CD4-positive, alpha-beta T cell (primary cell): ENCODE measurements at regions of chr17 and their contacts with region 1.

Region 1: GRCh38 chr17:1673041-1673785 is 11.5 kb downstream of the PRPF8 start:
- DNase-seq: peak in 6 of 14 experiments; percentile 21 to 63 (median 40)
- ATAC-seq: peak; percentile 46
- H3K4me3 ChIP-seq: no peak overlapping the region
- H3K4me3 Mint-ChIP-seq: no peak overlapping the region
- H3K27ac ChIP-seq: no peak overlapping the region
- H3K27ac Mint-ChIP-seq: peak overlapping the region; percentile 38
- H3K4me1 ChIP-seq: peaks cover 14% of the 10 kb centered on the region
- H3K4me1 Mint-ChIP-seq: peaks cover 38% of the 10 kb centered on the region
- H3K27me3 ChIP-seq: no peaks in the 10 kb centered on the region
- H3K27me3 Mint-ChIP-seq: no peaks in the 10 kb centered on the region
- CTCF ChIP-seq: no peak

Region 2: DNA sequence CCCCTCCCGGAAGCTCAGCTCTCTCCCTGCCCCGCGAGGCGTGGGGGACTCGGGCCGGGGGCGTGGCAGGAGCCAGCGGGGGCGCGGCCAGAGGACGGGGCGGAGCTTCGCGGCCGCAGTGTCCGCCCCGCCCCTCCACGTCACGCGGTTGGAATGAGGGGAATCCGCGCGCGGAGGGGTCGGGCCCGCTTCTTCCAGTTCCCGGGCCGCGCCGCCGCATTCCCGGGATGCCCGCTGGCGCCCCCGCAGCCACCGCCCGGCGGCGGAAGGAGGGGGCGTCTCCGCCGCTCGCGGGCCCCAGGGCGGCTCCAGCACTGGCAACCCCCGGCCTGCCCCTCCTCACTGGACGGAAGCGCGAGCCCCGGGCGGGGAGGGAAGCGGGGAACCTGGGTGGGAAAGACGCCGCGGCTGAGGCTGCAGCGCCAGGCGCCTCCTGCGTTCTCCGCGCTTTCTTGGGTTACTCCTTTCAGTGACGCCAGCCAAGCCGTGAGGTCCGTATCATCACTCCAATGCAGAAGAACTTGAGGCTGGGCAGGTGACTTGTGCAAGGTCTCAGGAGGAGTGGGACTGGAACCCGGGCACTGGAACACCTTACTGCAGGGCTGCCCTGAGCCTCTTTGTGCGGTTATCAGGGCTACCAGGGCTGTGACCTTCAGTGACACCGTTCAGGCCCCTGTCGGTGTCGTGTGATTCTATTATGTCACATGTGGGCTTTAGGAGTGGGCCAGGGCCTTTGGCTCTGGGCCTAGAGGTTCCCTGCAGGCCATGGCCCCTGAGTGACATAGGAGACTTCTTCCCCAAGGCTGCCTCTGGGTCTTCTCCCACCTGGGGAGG is 185.0 kb before region 1 on chr17:
- CTCF ChIA-PET with region 1: no interaction called
- POLR2A ChIA-PET with region 1: no interaction called
- intact Hi-C with region 1: no loop called
- DNase-seq: peak; percentile 40 to 88 (median 68)
- ATAC-seq: peak; percentile 34
- H3K4me3 ChIP-seq: peak overlapping the region; percentile 61
- H3K4me3 Mint-ChIP-seq: peak overlapping the region; percentile 88
- H3K27ac ChIP-seq: peak overlapping the region; percentile 24 to 35
- H3K27ac Mint-ChIP-seq: peak overlapping the region; percentile 91
- H3K4me1 ChIP-seq: peaks cover 78% of the 10 kb centered on the region
- H3K4me1 Mint-ChIP-seq: peaks cover 47% of the 10 kb centered on the region
- H3K27me3 ChIP-seq: no peaks in the 10 kb centered on the region
- H3K27me3 Mint-ChIP-seq: no peaks in the 10 kb centered on the region
- CTCF ChIP-seq: no peak

Region 3: DNA sequence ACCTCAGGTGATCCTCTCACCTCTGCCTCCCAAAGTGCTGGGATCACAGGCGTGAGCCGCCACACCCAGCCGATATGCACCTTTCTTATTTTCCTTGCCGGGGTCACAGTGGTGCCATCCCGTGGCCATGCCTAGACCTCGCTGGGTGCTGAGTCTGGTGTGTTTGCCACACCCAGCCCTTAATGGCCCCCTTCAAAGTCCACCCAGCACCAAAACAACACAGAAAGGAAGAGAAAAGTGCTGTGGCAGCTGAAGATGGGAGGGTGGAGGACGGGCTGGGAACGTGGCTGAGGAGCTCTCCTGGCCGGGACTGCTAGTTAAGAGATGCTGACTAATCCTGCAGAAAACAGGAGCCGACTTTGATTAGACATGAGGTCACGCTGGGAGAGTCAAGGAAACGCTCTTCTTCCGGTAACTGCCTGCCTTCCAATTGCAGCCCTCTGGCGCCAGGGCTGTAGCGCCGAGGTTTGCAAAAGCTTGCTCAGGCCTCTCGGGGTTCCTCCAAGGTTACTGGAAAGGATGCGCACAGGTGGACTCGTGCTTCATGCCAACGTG is 55.5 kb before region 1 on chr17:
- CTCF ChIA-PET with region 1: no interaction called
- POLR2A ChIA-PET with region 1: no interaction called
- intact Hi-C with region 1: no loop called
- DNase-seq: no peak
- ATAC-seq: no peak
- H3K4me3 ChIP-seq: no peak overlapping the region
- H3K4me3 Mint-ChIP-seq: no peak overlapping the region
- H3K27ac ChIP-seq: no peak overlapping the region
- H3K27ac Mint-ChIP-seq: no peak overlapping the region
- H3K4me1 ChIP-seq: peaks cover 7% of the 10 kb centered on the region
- H3K4me1 Mint-ChIP-seq: no peaks in the 10 kb centered on the region
- H3K27me3 ChIP-seq: no peaks in the 10 kb centered on the region
- H3K27me3 Mint-ChIP-seq: no peaks in the 10 kb centered on the region
- CTCF ChIP-seq: no peak

Region 4: GRCh38 chr17:1684378-1685189 is 11.4 kb after region 1 on chr17 and contains the start of gene PRPF8:
- CTCF ChIA-PET with region 1: interaction called, 10 read pairs
- POLR2A ChIA-PET with region 1: interaction called, 11 read pairs
- intact Hi-C with region 1: no loop called
- DNase-seq: peak; percentile 97 to 99 (median 98)
- ATAC-seq: peak; percentile 96
- H3K4me3 ChIP-seq: peak within 1 kb of the TSS; percentile 93
- H3K4me3 Mint-ChIP-seq: peak within 1 kb of the TSS; percentile 99
- H3K27ac ChIP-seq: peak within 1 kb of the TSS; percentile 86 to 95
- H3K27ac Mint-ChIP-seq: peak within 1 kb of the TSS; percentile 96
- H3K4me1 ChIP-seq: peaks cover 33% of the 10 kb centered on the region
- H3K4me1 Mint-ChIP-seq: peaks cover 49% of the 10 kb centered on the region
- H3K27me3 ChIP-seq: no peaks in the 10 kb centered on the region
- H3K27me3 Mint-ChIP-seq: no peaks in the 10 kb centered on the region
- CTCF ChIP-seq: no peak
- total RNA-seq, gene PRPF8: 550 to 572 TPM

Region 5: DNA sequence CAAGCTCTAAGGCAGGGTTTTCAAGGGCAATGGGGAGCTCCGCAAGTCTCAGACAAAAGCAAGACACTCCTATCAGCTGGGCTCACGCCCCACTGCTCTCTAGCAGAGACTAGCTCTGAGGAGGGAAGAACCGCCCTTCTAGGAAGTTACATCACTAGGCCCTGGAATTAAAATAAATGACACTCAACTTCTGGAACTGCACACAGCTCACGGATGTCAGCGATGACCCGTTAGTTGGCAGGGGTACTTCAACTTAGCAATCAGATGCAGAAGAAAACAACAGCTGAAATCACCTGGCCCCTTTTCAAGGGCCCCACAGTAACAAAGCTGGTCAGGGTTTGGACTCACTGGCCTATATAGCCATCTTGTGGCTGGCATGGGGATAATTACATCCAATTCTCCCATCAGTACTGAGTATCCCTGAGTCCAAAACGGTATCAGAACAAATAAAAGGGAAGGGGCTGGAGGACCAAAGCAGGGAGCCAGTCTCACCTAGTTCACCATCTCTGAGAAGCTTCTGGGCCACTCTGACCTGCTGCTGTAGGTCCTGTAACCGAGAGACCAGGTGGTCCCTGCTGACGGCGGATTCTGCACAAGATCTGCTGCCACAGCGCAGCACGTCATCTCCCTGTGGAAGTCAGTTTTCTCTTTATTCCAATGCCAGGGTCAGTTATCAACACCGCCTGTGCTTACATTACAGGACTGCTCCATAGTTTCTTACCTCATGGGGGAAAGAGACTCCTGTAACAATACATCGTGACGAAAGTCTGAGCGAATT is 110.8 kb after region 1 on chr17:
- CTCF ChIA-PET with region 1: interaction called, 6 read pairs
- POLR2A ChIA-PET with region 1: interaction called, 5 read pairs
- intact Hi-C with region 1: loop called in 1 of 2 experiments (anchors 1 kb)
- DNase-seq: peak in 3 of 14 experiments; percentile 31 to 65 (median 54)
- ATAC-seq: peak; percentile 68
- H3K4me3 ChIP-seq: no peak overlapping the region
- H3K4me3 Mint-ChIP-seq: no peak overlapping the region
- H3K27ac ChIP-seq: no peak overlapping the region
- H3K27ac Mint-ChIP-seq: peak overlapping the region; percentile 76
- H3K4me1 ChIP-seq: peaks cover 10% of the 10 kb centered on the region
- H3K4me1 Mint-ChIP-seq: peaks cover 10% of the 10 kb centered on the region
- H3K27me3 ChIP-seq: no peaks in the 10 kb centered on the region
- H3K27me3 Mint-ChIP-seq: no peaks in the 10 kb centered on the region
- CTCF ChIP-seq: peak; percentile 53

Region 6: DNA sequence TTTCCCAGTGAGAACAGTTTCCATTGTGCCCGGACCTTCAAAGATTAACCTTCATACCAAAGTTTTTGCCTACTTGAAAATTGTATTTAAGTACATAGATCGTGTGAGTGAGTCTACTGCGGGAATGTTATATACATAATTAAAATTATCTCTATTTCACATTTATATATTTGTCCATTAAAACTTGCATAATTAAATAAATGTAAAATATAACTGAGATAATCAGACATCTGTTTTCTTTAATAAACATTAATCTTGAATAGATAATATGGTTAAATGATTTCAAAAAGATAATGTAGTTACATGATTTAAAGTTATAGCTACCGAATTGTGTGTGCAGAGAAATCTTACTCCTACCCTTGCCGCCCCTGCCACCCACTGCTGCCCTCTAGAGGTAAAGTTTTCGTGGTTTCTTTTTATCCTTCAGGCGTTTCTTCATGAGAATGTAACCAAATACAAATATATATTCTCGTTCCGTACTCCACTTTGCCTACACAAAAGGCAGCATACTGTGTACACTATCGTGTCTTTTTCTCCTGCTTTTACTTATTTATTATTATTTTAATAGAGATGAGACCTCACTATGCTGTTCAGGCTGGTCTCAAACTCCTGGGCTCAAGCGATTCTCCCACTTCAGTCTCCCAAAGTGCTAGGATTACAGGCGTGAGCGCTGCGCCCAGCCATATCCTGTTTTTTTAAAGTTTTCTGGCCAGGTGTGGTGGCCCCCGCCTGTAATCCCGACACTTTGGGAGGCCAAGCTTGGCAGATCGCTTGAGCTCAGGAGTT is 192.2 kb after region 1 on chr17:
- CTCF ChIA-PET with region 1: no interaction called
- POLR2A ChIA-PET with region 1: no interaction called
- intact Hi-C with region 1: loop called (anchors 1 to 2 kb)
- DNase-seq: peak; percentile 20 to 80 (median 41)
- ATAC-seq: peak; percentile 70
- H3K4me3 ChIP-seq: no peak overlapping the region
- H3K4me3 Mint-ChIP-seq: no peak overlapping the region
- H3K27ac ChIP-seq: no peak overlapping the region
- H3K27ac Mint-ChIP-seq: no peak overlapping the region
- H3K4me1 ChIP-seq: peaks cover 15% of the 10 kb centered on the region
- H3K4me1 Mint-ChIP-seq: peaks cover 24% of the 10 kb centered on the region
- H3K27me3 ChIP-seq: no peaks in the 10 kb centered on the region
- H3K27me3 Mint-ChIP-seq: no peaks in the 10 kb centered on the region
- CTCF ChIP-seq: peak; percentile 81